T-cell (primary cell): ENCODE measurements at regions of chr14 and their contacts with region 1.

Region 1: GRCh38 chr14:41393512-41393911 is 213.2 kb upstream of the LRFN5 start:
- DNase-seq: no peak
- ATAC-seq: no peak
- H3K4me3 ChIP-seq: no peak overlapping the region
- H3K4me3 Mint-ChIP-seq: no peak overlapping the region
- H3K27ac ChIP-seq: no peak overlapping the region
- H3K27ac Mint-ChIP-seq: no peak overlapping the region
- H3K4me1 ChIP-seq: no peaks in the 10 kb centered on the region
- H3K4me1 Mint-ChIP-seq: no peaks in the 10 kb centered on the region
- H3K27me3 ChIP-seq: no peaks in the 10 kb centered on the region
- H3K27me3 Mint-ChIP-seq: no peaks in the 10 kb centered on the region

Region 2: DNA sequence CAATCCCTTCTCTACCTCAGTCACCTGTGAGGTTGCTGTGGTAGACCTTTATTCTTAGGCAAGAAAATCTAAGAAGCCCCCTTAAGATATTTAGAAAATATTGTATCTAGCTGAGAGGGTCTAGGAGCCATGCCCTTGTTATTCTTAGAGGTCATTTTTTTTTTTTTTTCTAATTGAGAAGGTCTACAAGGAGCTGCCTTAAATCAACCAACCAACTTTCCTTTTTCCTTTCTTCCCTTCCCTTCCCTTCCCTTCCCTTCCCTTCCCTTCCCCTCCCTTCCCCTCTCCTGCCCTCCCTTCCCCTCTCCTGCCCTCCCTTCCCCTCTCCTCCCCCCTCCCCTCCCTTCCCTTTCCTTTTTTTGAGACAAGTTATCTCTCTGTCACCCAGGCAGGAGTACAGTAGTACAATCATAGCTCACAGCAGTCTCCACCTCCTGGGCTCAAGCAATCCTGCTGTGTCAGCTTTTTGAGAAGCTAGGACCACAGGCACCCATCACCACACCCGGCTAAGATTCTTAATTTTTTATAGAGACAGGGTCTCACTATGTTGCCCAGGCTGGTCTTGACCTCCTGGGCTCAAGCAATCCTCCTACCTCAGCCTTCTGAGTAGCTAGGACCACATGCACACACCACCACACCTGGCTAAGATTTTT is 1292.8 kb before region 1 on chr14:
- CTCF ChIA-PET with region 1: interaction called in 1 of 2 experiments, 19 read pairs
- POLR2A ChIA-PET with region 1: no interaction called
- DNase-seq: no peak
- ATAC-seq: no peak
- H3K4me3 ChIP-seq: no peak overlapping the region
- H3K4me3 Mint-ChIP-seq: no peak overlapping the region
- H3K27ac ChIP-seq: no peak overlapping the region
- H3K27ac Mint-ChIP-seq: no peak overlapping the region
- H3K4me1 ChIP-seq: no peaks in the 10 kb centered on the region
- H3K4me1 Mint-ChIP-seq: no peaks in the 10 kb centered on the region
- H3K27me3 ChIP-seq: no peaks in the 10 kb centered on the region
- H3K27me3 Mint-ChIP-seq: no peaks in the 10 kb centered on the region

Region 3: DNA sequence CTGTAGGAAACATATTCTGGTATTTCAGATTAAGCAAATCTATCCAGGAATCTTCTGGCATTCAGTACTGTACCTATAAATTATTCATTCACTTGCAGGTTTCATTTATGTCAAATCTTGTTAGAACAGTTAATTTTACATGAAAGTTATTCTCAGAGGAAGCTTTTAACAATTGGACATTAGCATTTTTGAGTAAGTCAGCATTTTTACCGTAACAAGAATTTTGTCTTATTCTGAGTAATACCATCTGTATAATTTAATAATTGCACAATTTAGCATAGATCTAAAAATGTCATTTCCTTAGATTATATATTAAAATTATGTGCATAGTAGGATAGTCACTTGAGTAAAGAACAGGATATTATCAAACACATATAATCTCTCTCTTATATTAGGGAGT is 551.6 kb before region 1 on chr14:
- CTCF ChIA-PET with region 1: no interaction called
- POLR2A ChIA-PET with region 1: no interaction called
- DNase-seq: no peak
- ATAC-seq: no peak
- H3K4me3 ChIP-seq: no peak overlapping the region
- H3K4me3 Mint-ChIP-seq: no peak overlapping the region
- H3K27ac ChIP-seq: no peak overlapping the region
- H3K27ac Mint-ChIP-seq: no peak overlapping the region
- H3K4me1 ChIP-seq: no peaks in the 10 kb centered on the region
- H3K4me1 Mint-ChIP-seq: no peaks in the 10 kb centered on the region
- H3K27me3 ChIP-seq: no peaks in the 10 kb centered on the region
- H3K27me3 Mint-ChIP-seq: no peaks in the 10 kb centered on the region

Region 4: GRCh38 chr14:41377932-41378331 is 15.6 kb before region 1 on chr14:
- CTCF ChIA-PET with region 1: no interaction called
- POLR2A ChIA-PET with region 1: no interaction called
- DNase-seq: no peak
- ATAC-seq: no peak
- H3K4me3 ChIP-seq: no peak overlapping the region
- H3K4me3 Mint-ChIP-seq: no peak overlapping the region
- H3K27ac ChIP-seq: no peak overlapping the region
- H3K27ac Mint-ChIP-seq: no peak overlapping the region
- H3K4me1 ChIP-seq: no peaks in the 10 kb centered on the region
- H3K4me1 Mint-ChIP-seq: no peaks in the 10 kb centered on the region
- H3K27me3 ChIP-seq: no peaks in the 10 kb centered on the region
- H3K27me3 Mint-ChIP-seq: no peaks in the 10 kb centered on the region

Region 5: DNA sequence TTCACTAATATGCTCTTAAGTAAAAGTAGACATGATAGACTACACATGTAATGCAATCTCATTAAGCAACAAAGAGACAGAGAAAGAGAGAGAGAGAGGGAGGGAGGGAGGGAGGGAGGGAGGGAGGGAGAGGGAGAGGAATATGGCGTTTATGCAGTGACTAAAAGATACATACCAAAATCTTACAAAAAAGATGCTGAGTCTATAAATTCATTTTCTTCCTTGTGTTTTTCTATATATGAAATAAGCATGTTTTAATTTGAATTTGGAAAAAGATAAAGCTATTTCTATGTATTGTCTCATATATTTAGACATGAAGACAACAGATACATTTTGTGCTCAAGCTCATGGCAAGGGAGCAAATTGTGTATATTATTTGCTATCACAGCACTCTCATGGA is 257.3 kb after region 1 on chr14:
- CTCF ChIA-PET with region 1: no interaction called
- POLR2A ChIA-PET with region 1: no interaction called
- DNase-seq: no peak
- ATAC-seq: no peak
- H3K4me3 ChIP-seq: no peak overlapping the region
- H3K4me3 Mint-ChIP-seq: no peak overlapping the region
- H3K27ac ChIP-seq: no peak overlapping the region
- H3K27ac Mint-ChIP-seq: no peak overlapping the region
- H3K4me1 ChIP-seq: no peaks in the 10 kb centered on the region
- H3K4me1 Mint-ChIP-seq: no peaks in the 10 kb centered on the region
- H3K27me3 ChIP-seq: no peaks in the 10 kb centered on the region
- H3K27me3 Mint-ChIP-seq: no peaks in the 10 kb centered on the region